ENCODE measurements at regions of chr3 and their contacts with region 1.

Region 1: DNA sequence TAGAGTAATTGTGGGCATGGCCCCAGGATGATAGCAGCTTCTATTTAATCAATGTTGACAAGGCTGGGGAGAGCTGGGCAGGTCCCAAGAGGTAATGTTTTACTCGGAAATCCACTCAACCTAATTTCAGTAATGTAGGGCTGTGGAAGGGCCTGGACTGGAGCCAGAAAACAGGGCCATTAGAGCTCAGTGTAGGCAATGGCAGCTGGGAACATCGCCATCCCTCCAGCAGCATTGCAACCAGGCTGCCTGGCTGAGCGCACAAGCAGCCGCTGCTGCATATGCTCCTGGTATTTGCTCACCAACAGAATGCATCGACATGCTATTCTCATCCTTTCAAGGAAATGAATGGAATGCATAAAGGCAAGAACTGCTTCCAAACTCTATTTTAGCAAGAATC is 90.0 kb downstream of the GAP43 start:
- DNase-seq: no peak
- ATAC-seq: no peak
- H3K4me3 ChIP-seq: no peak overlapping the region
- H3K4me3 Mint-ChIP-seq: no peak overlapping the region
- H3K27ac ChIP-seq: no peak overlapping the region
- H3K27ac Mint-ChIP-seq: no peak overlapping the region
- H3K4me1 ChIP-seq: no peaks in the 10 kb centered on the region
- H3K4me1 Mint-ChIP-seq: no peaks in the 10 kb centered on the region
- H3K27me3 ChIP-seq: peaks cover 0 to 2% (median 0%) of the 10 kb centered on the region in 4 experiments
- H3K27me3 Mint-ChIP-seq: peaks cover 17% of the 10 kb centered on the region
- CTCF ChIP-seq: no peak

Region 2: DNA sequence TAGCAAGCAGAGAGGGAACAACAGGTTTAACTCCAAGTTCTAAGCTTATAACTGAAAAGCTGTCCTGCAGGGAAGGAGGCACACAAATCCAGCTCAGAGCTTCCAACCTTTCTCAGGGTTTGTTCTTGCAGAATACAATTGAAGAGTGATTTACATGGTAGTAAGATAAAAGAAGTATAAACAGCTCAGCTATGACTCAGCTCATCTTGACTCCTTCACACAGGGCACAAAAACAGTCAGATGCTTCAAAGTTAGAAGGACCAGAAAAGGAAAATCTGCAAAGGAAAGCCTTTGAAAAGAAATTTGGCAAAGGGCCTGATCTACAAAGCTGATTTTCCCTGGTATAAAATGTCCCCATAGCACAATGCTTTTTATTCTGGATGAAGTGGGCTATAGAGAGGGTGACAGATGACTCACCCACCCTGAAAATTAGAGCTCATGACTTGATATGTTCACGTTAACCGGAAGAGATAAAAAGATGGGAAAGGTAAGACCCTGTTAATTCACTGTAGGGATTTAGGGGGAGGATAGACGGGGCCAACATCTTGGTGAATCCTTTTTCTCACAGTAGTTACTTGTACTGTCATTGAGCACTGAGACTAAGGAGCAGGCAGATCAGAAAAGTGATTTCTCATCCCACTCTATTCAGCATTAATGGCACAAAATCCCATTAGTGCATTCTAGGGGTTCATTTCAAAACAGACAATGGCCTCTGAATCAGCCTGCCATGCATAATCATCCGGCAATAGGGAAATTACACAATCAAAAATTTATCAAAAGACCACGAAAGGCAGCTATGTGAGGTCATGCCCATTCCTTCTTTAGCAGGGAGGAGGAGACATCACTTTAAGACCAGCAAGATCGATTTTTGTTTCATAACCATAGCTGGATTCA is 53.5 kb after region 1 on chr3:
- CTCF ChIA-PET with region 1: no interaction called
- POLR2A ChIA-PET with region 1: no interaction called
- intact Hi-C with region 1: loop called (anchors 10 kb)
- DNase-seq: no peak
- ATAC-seq: no peak
- H3K4me3 ChIP-seq: no peak overlapping the region
- H3K4me3 Mint-ChIP-seq: no peak overlapping the region
- H3K27ac ChIP-seq: no peak overlapping the region
- H3K27ac Mint-ChIP-seq: no peak overlapping the region
- H3K4me1 ChIP-seq: no peaks in the 10 kb centered on the region
- H3K4me1 Mint-ChIP-seq: no peaks in the 10 kb centered on the region
- H3K27me3 ChIP-seq: peaks cover 0 to 3% (median 0%) of the 10 kb centered on the region in 4 experiments
- H3K27me3 Mint-ChIP-seq: peaks cover 18% of the 10 kb centered on the region
- CTCF ChIP-seq: no peak